ENCODE measurements at regions of chr19 and their contacts with region 1.

Region 1: DNA sequence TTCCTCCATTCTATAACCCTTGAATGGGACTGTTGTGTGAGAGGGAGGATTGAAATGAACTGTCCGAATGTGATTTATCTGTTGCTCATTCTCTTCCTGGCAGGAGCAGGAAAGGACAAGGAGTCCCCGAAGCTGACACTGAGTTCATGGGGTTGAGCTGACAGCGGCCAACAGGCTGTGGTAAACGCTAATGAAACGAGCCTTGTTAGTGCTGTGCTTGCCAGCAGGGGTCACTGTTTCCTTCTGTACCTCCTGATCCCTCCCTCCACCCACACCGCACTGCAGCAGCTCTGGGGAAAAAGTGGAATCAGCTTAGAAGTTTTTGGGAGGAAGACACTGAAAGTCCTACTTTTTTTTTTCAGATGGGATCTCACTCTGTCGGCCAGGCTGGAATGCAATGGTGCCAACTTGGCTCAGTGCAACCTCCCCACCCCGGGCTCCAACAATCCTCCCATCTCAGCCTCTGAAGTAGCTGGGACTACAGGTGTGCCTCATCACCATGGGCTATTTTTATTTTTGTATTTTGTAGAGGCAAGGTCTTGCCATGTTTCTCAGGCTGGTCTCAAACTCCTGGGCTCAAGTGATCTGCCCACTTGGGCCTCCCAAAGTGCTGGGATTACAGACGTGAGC is 6.7 kb upstream of the ZNF761 start:
- DNase-seq: peak; percentile 39 to 84
- H3K4me3 ChIP-seq: no peak overlapping the region
- H3K27ac ChIP-seq: no peak overlapping the region
- H3K4me1 ChIP-seq: peaks cover 0 to 2% (median 0%) of the 10 kb centered on the region in 4 experiments; a peak in 2 of 7 replicates
- H3K27me3 ChIP-seq: no peaks in the 10 kb centered on the region
- CTCF ChIP-seq: peak; percentile 84 to 97 (median 90)
- EP300 ChIP-seq: no peak
- POLR2A ChIP-seq: no peak
- RAD21 ChIP-seq: peak; percentile 85

Region 2: GRCh38 chr19:53381379-53381778 is 43.7 kb before region 1 on chr19:
- CTCF ChIA-PET with region 1: no interaction called
- POLR2A ChIA-PET with region 1: no interaction called
- DNase-seq: no peak
- H3K4me3 ChIP-seq: no peak overlapping the region
- H3K27ac ChIP-seq: no peak overlapping the region
- H3K4me1 ChIP-seq: no peaks in the 10 kb centered on the region
- H3K27me3 ChIP-seq: no peaks in the 10 kb centered on the region
- CTCF ChIP-seq: no peak
- EP300 ChIP-seq: no peak
- POLR2A ChIP-seq: no peak
- RAD21 ChIP-seq: no peak

Region 3: GRCh38 chr19:53471916-53472315 is 46.8 kb after region 1 on chr19:
- CTCF ChIA-PET with region 1: interaction called, 13 read pairs
- POLR2A ChIA-PET with region 1: no interaction called
- DNase-seq: no peak
- H3K4me3 ChIP-seq: no peak overlapping the region
- H3K27ac ChIP-seq: no peak overlapping the region
- H3K4me1 ChIP-seq: peaks cover 0 to 4% (median 3%) of the 10 kb centered on the region in 4 experiments; a peak in 2 of 7 replicates
- H3K27me3 ChIP-seq: no peaks in the 10 kb centered on the region
- CTCF ChIP-seq: no peak
- EP300 ChIP-seq: no peak
- POLR2A ChIP-seq: no peak
- RAD21 ChIP-seq: no peak

Region 4: GRCh38 chr19:53511933-53512374 is 86.9 kb after region 1 on chr19:
- CTCF ChIA-PET with region 1: interaction called, 15 read pairs
- POLR2A ChIA-PET with region 1: interaction called, 3 read pairs
- DNase-seq: peak; percentile 59 to 88
- H3K4me3 ChIP-seq: no peak overlapping the region
- H3K27ac ChIP-seq: no peak overlapping the region
- H3K4me1 ChIP-seq: no peaks in the 10 kb centered on the region
- H3K27me3 ChIP-seq: no peaks in the 10 kb centered on the region
- CTCF ChIP-seq: peak; percentile 89 to 97 (median 95)
- EP300 ChIP-seq: no peak
- POLR2A ChIP-seq: no peak
- RAD21 ChIP-seq: peak; percentile 61 to 77

Region 5: DNA sequence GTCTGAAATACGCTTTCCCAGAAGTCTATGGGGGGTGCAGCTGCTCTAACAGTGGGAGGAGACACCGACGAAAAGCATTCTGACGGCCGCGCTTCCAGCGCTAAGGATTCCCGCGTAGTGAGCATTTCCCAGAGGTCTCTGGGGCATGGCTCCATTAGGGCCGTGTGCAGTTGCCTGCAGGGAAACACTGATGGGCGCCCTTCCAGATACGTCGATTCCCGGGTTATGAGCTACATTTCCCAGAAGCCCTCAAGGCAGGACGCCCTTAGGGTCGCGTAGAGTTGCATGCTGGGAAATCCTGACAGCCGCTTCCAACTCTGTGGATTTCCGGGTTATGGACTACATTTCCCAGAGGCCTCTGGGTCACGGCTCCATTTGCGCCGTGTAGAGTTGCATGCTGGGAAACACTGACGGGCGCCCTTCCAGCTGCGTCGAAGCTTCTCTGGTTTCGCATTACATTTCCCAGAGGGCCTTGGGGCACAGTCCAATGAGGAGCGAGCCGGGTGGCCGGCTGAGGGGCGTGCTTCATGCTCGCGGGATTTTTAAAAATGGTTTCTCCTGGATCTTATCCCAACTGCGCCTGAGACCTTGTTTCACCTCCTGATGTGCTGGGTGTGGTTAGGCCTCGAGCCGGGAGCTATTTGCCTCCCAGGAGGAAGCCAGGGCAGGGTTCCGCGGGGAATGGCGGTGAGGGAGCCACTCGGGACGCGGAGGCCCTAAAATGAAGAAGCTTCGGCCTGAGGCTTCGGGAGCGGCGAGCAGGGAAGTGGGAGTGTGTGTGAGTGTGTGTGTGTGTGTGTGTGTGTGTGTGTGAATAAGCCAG is 95.7 kb after region 1 on chr19:
- CTCF ChIA-PET with region 1: interaction called, 13 read pairs
- POLR2A ChIA-PET with region 1: interaction called, 5 read pairs
- DNase-seq: peak; percentile 86 to 96
- H3K4me3 ChIP-seq: peak overlapping the region; percentile 82 to 98 (median 91)
- H3K27ac ChIP-seq: peak overlapping the region; percentile 57; the same call in 1 of the 2 replicates
- H3K4me1 ChIP-seq: peaks cover 0 to 9% (median 2%) of the 10 kb centered on the region in 4 experiments; a peak in 4 of 7 replicates
- H3K27me3 ChIP-seq: peaks cover 0 to 3% (median 1%) of the 10 kb centered on the region in 4 experiments; a peak in 2 of 7 replicates
- CTCF ChIP-seq: no peak
- EP300 ChIP-seq: 0 out of 3 replicates have a peak, but pooled peaks of 1 of the 2 experiments have one; percentile 5
- POLR2A ChIP-seq: peak in 1 of 2 experiments; percentile 50; a peak in 2 of 3 replicates
- RAD21 ChIP-seq: no peak

Region 6: GRCh38 chr19:53580976-53581800 is 156.1 kb after region 1 on chr19:
- CTCF ChIA-PET with region 1: no interaction called
- POLR2A ChIA-PET with region 1: no interaction called
- DNase-seq: peak in 1 of 2 experiments; percentile 49
- H3K4me3 ChIP-seq: no peak overlapping the region
- H3K27ac ChIP-seq: no peak overlapping the region
- H3K4me1 ChIP-seq: peaks cover 0 to 11% (median 8%) of the 10 kb centered on the region in 4 experiments; a peak in 4 of 7 replicates
- H3K27me3 ChIP-seq: no peaks in the 10 kb centered on the region
- CTCF ChIP-seq: no peak
- EP300 ChIP-seq: no peak
- POLR2A ChIP-seq: no peak
- RAD21 ChIP-seq: no peak